MCF 10A (cell line): ENCODE measurements at regions of chr16 and their contacts with region 1.

Region 1: DNA sequence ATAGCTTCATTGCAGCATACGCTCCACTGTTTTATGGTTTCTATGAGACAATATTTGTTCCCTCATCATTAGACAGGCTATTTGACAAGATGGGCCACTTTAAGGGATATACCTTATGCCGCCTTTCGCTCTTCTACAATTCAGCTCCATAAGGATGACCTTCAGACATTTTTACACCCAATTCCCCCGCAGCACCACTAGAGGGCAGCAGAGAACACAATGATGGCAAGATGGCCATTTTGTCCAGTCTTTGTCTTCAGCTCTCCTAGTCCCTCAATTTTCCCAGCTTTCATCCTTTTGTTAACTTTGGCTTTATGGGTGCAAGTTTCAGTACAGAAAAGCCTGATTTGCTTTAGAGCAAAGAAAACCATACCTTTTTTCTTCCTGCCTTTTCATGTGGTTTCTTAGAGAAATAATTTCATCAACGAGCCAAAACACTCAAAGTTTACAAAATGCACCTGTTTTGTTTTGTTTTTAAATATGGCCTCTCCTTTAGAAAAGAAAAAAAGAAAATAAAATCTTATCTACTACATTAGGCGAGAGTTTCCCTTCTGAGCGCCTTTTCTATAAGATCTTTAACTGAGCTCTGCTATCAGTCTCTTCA is 355.3 kb downstream of the TOX3 start:
- DNase-seq: peak; percentile 65
- H3K4me3 Mint-ChIP-seq: no peak overlapping the region
- H3K27ac Mint-ChIP-seq: no peak overlapping the region
- H3K4me1 Mint-ChIP-seq: no peaks in the 10 kb centered on the region
- H3K27me3 Mint-ChIP-seq: peaks cover 13% of the 10 kb centered on the region
- CTCF ChIP-seq: peak; percentile 74

Region 2: DNA sequence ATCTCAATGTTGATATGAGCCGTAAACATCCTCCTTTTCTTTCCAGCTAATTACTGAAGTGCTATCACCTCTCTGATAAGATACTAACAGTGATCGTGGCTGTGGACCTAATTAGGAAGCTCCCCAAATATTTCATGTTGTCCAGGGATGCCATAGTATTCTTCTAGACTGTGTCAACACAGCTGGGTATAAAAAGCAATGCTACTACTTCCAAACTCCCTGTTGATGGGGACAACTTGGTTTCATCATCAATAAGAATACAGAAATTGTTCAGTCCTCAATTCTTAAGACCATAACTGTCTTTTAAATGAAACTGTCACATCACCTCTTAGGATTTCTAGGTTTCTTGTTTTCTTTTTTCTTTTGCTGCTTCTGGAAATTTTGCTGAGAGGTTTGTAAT is 175.2 kb before region 1 on chr16:
- CTCF ChIA-PET with region 1: no interaction called
- POLR2A ChIA-PET with region 1: no interaction called
- intact Hi-C with region 1: no loop called
- DNase-seq: no peak
- H3K4me3 Mint-ChIP-seq: no peak overlapping the region
- H3K27ac Mint-ChIP-seq: no peak overlapping the region
- H3K4me1 Mint-ChIP-seq: no peaks in the 10 kb centered on the region
- H3K27me3 Mint-ChIP-seq: peaks cover 30% of the 10 kb centered on the region
- CTCF ChIP-seq: no peak

Region 3: GRCh38 chr16:52068447-52069074 is 123.1 kb before region 1 on chr16:
- CTCF ChIA-PET with region 1: interaction called, 35 read pairs
- POLR2A ChIA-PET with region 1: no interaction called
- intact Hi-C with region 1: loop called (anchors 1 kb)
- DNase-seq: peak; percentile 31
- H3K4me3 Mint-ChIP-seq: no peak overlapping the region
- H3K27ac Mint-ChIP-seq: no peak overlapping the region
- H3K4me1 Mint-ChIP-seq: no peaks in the 10 kb centered on the region
- H3K27me3 Mint-ChIP-seq: peaks cover 88% of the 10 kb centered on the region
- CTCF ChIP-seq: peak; percentile 12

Region 4: DNA sequence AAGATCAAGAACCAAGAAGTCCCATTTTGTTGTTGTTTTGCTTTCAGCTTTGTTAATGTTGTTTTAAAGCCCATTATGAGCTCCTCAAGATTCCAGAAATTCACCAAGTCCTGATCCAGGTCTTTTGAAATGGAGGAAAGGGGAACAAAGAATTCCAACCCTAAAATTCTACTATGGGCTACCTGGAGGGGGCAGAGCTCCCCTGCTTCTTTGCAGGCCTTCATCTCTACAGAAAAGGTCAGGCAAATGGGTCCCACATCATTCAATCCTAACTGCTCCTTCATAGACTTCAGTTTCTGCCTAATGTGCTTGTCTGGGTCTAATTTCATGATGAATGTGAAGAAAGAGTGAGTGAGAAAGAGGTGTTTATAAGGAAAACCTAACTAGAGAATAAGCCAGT is 20.2 kb before region 1 on chr16:
- CTCF ChIA-PET with region 1: interaction called, 23 read pairs
- POLR2A ChIA-PET with region 1: no interaction called
- intact Hi-C with region 1: no loop called
- DNase-seq: no peak
- H3K4me3 Mint-ChIP-seq: no peak overlapping the region
- H3K27ac Mint-ChIP-seq: no peak overlapping the region
- H3K4me1 Mint-ChIP-seq: no peaks in the 10 kb centered on the region
- H3K27me3 Mint-ChIP-seq: peaks cover 14% of the 10 kb centered on the region
- CTCF ChIP-seq: no peak

Region 5: GRCh38 chr16:52203096-52203495 is 11.5 kb after region 1 on chr16:
- CTCF ChIA-PET with region 1: interaction called, 40 read pairs
- POLR2A ChIA-PET with region 1: no interaction called
- intact Hi-C with region 1: no loop called
- DNase-seq: no peak
- H3K4me3 Mint-ChIP-seq: no peak overlapping the region
- H3K27ac Mint-ChIP-seq: no peak overlapping the region
- H3K4me1 Mint-ChIP-seq: no peaks in the 10 kb centered on the region
- H3K27me3 Mint-ChIP-seq: no peaks in the 10 kb centered on the region
- CTCF ChIP-seq: no peak

Region 6: GRCh38 chr16:52861614-52862022 is 670.0 kb after region 1 on chr16:
- CTCF ChIA-PET with region 1: interaction called, 25 read pairs
- POLR2A ChIA-PET with region 1: no interaction called
- intact Hi-C with region 1: loop called (anchors 1 kb)
- DNase-seq: peak; percentile 46
- H3K4me3 Mint-ChIP-seq: no peak overlapping the region
- H3K27ac Mint-ChIP-seq: no peak overlapping the region
- H3K4me1 Mint-ChIP-seq: no peaks in the 10 kb centered on the region
- H3K27me3 Mint-ChIP-seq: peaks cover 70% of the 10 kb centered on the region
- CTCF ChIP-seq: peak; percentile 30

Region 7: GRCh38 chr16:52912565-52913173 is 721.0 kb after region 1 on chr16:
- CTCF ChIA-PET with region 1: interaction called, 168 read pairs
- POLR2A ChIA-PET with region 1: interaction called, 4 read pairs
- intact Hi-C with region 1: no loop called
- DNase-seq: peak; percentile 78
- H3K4me3 Mint-ChIP-seq: no peak overlapping the region
- H3K27ac Mint-ChIP-seq: no peak overlapping the region
- H3K4me1 Mint-ChIP-seq: no peaks in the 10 kb centered on the region
- H3K27me3 Mint-ChIP-seq: peaks cover 30% of the 10 kb centered on the region
- CTCF ChIP-seq: peak; percentile 82

Region 8: GRCh38 chr16:53509906-53510703 is 1318.5 kb after region 1 on chr16:
- CTCF ChIA-PET with region 1: no interaction called
- POLR2A ChIA-PET with region 1: no interaction called
- intact Hi-C with region 1: loop called (anchors 5 kb)
- DNase-seq: peak; percentile 63
- H3K4me3 Mint-ChIP-seq: no peak overlapping the region
- H3K27ac Mint-ChIP-seq: no peak overlapping the region
- H3K4me1 Mint-ChIP-seq: no peaks in the 10 kb centered on the region
- H3K27me3 Mint-ChIP-seq: no peaks in the 10 kb centered on the region
- CTCF ChIP-seq: peak; percentile 79